ENCODE measurements at regions of chr12 and their contacts with region 1.

Region 1: GRCh38 chr12:54379401-54380201 is 4.9 kb downstream of the ZNF385A start:
- DNase-seq: peak; percentile 98
- ATAC-seq: peak; percentile 82
- H3K4me3 Mint-ChIP-seq: peak overlapping the region; percentile 72
- H3K27ac Mint-ChIP-seq: peak overlapping the region; percentile 88; the same call in 1 of the 2 replicates
- H3K4me1 Mint-ChIP-seq: peaks cover 24% of the 10 kb centered on the region
- H3K27me3 Mint-ChIP-seq: peaks cover 10% of the 10 kb centered on the region
- CTCF ChIP-seq: peak; percentile 98

Region 2: DNA sequence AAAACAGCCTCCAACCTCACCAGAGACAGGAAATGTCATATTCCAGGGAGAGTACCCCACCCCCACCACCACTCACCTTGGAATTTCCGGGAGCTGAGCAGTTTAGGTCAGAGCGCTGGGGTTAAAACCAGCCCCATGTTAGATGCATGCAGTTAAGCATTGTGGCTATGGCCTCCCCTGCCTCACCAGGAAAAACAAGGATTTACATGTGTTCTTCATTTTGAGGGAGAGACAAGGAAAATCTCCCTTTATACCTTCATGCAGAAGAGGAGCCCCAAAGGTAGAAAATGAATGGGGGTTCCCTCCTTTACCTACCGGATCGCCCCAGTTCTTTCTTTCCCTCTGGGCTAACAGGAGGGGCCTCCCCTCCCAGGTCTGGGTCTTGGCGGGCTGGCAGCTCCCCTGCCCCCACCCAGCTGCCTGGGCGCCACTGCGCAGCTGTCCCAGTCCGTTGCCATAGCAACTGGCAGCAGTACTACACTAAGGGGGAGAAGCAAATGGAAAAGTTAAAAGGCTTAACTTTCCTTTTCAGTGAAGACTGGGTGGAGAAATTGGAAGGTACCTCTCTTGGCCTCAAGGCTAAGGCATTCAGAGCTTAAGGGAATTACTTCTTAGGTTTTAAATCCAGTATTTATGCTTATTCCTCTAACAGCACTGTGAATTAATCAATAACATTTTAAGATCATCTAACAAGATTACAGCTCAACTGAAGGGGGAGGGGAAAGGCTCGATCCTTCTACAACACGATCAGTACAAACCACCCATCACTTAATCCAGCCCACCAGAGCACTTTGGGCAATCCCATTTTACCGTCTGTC is 120.2 kb before region 1 on chr12:
- CTCF ChIA-PET with region 1: interaction called, 12 read pairs
- POLR2A ChIA-PET with region 1: interaction called, 3 read pairs
- DNase-seq: peak; percentile 91
- ATAC-seq: peak; percentile 94
- H3K4me3 Mint-ChIP-seq: peak overlapping the region; percentile 66
- H3K27ac Mint-ChIP-seq: peak overlapping the region; percentile 99
- H3K4me1 Mint-ChIP-seq: peaks cover 63% of the 10 kb centered on the region
- H3K27me3 Mint-ChIP-seq: no peaks in the 10 kb centered on the region
- CTCF ChIP-seq: no peak

Region 3: DNA sequence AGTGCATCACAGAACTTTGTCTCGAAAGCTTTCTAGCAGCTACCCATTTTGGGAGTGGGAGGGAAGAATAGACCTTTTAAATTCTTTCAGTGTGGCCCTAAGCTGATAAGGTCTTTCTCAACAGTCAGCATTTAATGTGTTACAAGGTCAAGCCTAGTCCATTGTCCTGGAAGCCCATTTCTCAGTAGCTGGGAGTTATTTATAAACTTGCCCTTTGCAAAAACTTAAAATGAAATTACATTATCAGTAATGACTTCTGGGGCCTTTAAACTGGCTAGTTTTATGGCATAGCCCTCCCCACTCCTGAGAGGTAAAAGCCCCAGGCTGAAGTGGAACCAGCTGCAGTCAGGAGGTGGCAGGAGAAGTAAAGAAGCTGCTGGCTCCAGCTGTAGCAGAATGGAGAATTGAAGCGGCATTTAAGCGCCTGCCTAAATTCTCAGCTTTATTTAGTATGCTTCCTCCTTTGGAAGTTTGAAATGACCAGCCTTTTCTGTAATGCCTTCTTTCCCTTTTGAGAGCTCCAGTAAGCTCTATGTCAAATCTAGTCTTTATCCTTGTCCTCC is 42.2 kb before region 1 on chr12:
- CTCF ChIA-PET with region 1: interaction called, 27 read pairs
- POLR2A ChIA-PET with region 1: no interaction called
- DNase-seq: no peak
- ATAC-seq: no peak
- H3K4me3 Mint-ChIP-seq: no peak overlapping the region
- H3K27ac Mint-ChIP-seq: no peak overlapping the region
- H3K4me1 Mint-ChIP-seq: peaks cover 5% of the 10 kb centered on the region
- H3K27me3 Mint-ChIP-seq: no peaks in the 10 kb centered on the region
- CTCF ChIP-seq: no peak

Region 4: DNA sequence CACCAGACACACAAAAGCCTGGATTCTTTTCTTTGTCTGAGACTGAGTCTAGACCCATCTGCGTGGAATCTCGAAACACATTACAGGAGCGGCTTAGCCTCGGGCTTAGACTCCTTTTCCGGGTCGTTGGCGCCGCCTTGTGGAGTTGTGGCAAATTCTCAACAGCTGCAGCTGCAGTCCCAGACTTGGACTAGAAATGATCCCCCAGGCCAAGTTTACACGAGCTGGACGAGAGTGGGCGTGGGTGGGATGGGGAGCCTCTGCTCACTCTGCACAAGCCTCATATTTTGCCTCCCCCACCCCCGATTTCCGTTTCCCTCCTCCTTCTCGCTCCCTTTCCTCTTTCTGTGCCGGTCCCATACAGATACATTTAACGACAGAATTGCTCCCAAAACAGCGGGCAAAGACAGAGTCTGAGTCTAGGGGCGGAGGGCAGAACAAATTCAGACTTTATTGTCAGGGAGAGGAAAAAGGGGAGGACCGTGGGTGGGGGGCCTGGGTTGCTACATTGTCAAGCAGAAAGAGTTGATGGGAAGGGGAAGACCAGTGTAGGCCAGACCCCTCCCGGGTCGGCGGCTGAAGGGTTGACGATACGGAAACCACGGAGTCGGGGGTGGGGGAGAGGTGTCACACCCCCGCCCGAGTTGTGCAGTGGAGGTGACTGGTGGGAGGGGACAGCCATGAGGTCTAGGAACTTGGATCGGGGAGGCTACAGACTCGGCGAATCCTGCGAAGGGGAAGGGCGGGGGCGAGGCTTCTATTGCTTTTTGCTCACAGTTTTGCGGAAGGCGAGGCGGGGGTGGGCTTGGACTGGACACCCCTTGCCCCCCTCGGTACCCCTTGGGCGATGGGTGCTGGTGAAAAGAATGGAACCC is 10.7 kb before region 1 on chr12:
- CTCF ChIA-PET with region 1: interaction called, 167 read pairs
- POLR2A ChIA-PET with region 1: no interaction called
- DNase-seq: peak; percentile 90
- ATAC-seq: peak; percentile 49
- H3K4me3 Mint-ChIP-seq: peak overlapping the region; percentile 75
- H3K27ac Mint-ChIP-seq: no peak overlapping the region
- H3K4me1 Mint-ChIP-seq: peaks cover 24% of the 10 kb centered on the region
- H3K27me3 Mint-ChIP-seq: peaks cover 49% of the 10 kb centered on the region
- CTCF ChIP-seq: peak; percentile 73

Region 5: DNA sequence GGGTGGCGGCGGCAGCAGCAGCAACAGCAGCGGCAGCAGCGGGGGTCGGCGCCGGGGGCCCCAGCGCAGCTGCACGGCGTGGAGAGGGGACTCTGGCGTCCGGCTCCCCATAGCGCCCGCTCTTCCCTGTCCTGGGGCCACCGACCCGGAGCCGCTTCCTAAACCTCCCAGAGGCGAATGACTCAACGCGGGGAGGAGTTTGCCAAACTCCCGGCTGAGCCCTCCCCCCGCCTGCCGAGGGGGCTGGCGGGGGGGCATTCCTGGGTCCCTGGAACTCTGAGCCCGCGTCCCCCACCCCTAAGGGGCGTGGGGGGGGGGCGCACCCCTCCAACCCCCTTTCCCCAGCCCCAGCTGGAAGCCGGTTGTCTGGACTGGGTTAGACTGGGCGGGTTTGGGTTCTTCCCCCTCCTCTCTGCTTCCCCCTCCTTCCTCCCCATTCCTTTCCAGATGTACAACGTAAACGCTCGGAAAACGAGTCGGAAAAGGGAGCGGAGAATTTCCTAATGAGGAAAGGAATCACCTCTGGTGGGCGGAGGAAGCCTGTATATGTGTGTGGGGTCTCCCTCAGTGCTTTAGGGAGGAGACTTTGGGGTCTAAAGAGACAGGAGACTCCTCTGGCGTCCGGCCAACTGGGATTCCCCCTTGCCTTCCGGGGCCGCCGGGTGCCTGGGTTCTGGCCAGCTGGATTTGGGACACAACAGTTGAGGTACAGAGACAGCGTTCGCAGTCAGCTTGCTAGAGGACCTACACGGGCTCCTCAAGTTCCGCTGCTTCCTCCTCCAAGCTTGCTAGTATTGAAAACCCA is 39.7 kb after region 1 on chr12 and contains the start of gene ITGA5:
- CTCF ChIA-PET with region 1: interaction called, 16 read pairs
- POLR2A ChIA-PET with region 1: no interaction called
- DNase-seq: peak; percentile 62
- ATAC-seq: peak; percentile 40
- H3K4me3 Mint-ChIP-seq: peak within 1 kb of the TSS; percentile 84
- H3K27ac Mint-ChIP-seq: no peak within 1 kb of the TSS
- H3K4me1 Mint-ChIP-seq: peaks cover 34% of the 10 kb centered on the region
- H3K27me3 Mint-ChIP-seq: peaks cover 63% of the 10 kb centered on the region
- CTCF ChIP-seq: no peak
- total RNA-seq, gene ITGA5: 19.3 to 21.9 TPM (median 20.8 TPM) in 3 replicates